Colonic mucosa (tissue), 4 donors: ENCODE measurements at regions of chr15 and their contacts with region 1.

Region 1: DNA sequence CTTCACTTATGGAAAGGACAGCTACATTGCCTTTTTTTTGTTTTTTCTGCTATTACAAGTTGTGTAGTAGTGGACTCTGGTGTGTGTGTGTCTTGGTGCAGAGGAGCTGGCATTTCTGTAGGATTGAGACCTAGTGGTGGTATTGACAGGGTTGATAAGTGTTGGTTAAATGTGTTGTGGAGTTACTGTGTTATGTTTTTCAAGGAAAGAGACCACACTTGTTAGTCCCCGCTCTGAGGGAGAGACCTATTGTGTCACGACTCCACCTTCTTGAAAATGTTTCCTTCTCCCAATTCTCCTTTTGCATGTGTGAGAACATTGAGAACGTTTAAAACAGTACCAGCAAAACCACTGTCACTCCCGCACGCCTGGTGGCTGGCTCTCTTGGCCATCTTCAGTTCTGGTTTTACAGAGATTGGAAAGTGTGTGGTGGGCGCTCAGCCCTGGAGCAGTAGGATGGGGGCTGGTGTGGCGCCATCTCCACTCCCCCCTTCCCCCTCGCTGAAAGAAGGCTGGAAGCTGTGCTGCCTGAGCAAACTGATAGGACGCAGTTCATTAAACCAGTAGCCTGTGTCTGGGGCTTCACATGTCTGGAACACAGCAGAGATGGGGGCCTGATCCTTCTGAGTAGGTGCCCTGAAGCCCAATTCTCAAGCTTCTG is 5.5 kb downstream of the KLF13 start:
- DNase-seq: no peak
- H3K4me3 ChIP-seq: no peak overlapping the region
- H3K27ac ChIP-seq: no peak overlapping the region
- H3K4me1 ChIP-seq: peaks cover 21% of the 10 kb centered on the region
- H3K27me3 ChIP-seq: no peaks in the 10 kb centered on the region
- CTCF ChIP-seq: no peak

Region 2: DNA sequence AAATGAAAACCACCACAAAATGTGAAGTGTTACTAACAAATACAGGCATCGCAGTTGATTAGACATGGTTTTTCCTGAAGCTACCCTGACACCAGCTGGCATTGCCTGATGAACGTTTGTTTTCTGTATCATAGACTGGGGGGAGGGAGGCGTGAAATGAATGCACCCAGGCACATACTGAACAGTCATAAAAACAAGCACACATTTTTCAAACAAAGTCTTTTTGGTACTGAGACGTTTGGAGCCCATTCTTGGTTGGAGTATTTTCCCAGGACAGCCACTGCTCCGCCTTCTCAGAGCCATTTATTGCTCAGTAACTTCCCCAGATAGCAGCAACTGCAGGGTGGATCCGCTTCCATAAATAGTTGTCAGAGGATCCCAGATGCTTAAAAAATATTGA is 46.9 kb after region 1 on chr15:
- intact Hi-C with region 1: loop called (anchors 5 kb)
- DNase-seq: no peak
- H3K4me3 ChIP-seq: no peak overlapping the region
- H3K27ac ChIP-seq: no peak overlapping the region
- H3K4me1 ChIP-seq: peaks cover 9% of the 10 kb centered on the region
- H3K27me3 ChIP-seq: no peaks in the 10 kb centered on the region
- CTCF ChIP-seq: no peak